ENCODE measurements at regions of chr10 and their contacts with region 1.

Region 1: DNA sequence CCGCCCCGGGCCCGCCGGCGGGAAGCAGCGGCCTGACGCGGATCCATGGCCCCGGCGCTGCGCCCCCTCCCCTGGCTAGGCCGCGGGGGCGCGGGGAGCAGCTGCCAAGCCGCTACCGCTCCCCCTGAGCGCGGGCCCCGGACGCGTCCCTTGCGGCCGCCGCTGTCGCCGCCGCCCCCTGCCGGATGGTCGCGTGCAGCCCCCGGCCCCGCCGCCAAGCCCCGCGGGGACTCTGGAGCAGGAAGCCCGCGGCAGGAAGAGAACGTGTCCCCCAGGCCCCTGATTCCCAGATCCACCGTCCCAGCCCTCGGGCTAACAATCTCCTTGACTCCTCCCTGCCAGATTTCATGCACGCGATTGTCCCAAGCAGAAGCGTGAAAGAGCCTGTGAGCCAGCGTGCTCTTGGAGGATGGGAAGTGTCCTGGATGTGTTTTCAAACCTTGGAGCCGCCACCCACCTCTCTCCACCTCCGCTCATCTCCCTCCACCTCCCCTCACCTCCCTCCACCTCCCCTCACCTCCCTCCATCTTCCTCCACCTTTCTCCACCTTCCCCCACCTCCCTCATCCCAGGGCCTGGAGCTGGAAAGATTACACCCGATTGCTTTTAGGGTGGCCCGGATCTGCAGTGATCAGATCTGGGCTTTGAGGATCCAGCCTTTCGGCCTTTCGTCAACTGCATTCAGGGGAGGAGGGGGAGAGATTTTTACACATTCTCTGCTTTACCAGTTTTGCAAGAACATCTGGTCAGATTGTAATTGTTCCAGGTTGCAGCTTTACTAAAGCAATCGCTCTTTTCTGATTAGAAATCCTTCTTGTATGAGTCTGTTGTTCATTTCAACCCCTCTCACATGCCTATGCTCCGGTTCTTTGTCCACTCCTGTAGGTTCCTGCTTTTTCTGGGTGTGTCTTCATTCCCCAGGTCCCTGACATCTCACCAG is 570 bp upstream of the PRTFDC1 start:
- DNase-seq: peak; percentile 53
- H3K4me3 ChIP-seq: peak overlapping the region; percentile 57
- H3K27ac ChIP-seq: peak overlapping the region; percentile 66
- H3K4me1 ChIP-seq: no peaks in the 10 kb centered on the region
- H3K27me3 ChIP-seq: no peaks in the 10 kb centered on the region
- CTCF ChIP-seq: peak; percentile 25

Region 2: DNA sequence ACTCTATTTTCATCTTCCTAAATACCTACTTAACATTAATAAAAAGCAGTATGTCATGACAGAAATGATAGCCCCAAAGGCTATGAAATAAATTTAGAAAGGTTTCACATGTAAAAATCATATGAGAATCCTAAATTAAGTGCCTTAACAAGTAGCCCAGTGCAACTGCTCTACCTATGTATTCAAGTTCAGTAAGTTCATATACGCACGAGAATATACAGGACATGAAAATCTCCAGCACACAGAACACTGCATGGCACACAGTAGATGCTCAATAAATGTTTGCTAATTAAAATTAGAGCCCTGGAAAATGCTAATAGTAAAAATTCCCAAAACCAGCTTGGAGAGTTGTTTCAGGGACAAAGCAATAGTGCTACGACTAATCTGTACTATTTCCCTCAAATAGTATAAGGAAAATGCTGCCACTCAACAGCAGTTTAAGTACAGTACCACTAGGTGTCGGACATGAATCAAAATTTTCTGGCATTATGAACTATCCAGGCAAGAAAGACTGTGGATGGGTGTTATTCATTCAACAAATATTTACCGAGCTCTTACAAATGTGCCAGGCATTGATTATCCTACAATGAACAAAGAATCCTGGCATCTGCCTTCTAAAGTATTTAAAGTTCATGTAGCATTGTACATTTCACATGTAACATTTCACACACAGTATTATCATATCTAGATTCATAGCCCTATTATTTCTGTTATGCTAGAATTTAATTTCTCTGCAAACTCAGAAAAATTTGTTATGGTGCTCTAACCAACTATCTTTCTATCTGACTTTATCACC is 310.2 kb before region 1 on chr10:
- intact Hi-C with region 1: loop called (anchors 5 kb)
- DNase-seq: peak; percentile 37
- H3K4me3 ChIP-seq: no peak overlapping the region
- H3K27ac ChIP-seq: peak overlapping the region; percentile 19
- H3K4me1 ChIP-seq: peaks cover 7% of the 10 kb centered on the region
- H3K27me3 ChIP-seq: no peaks in the 10 kb centered on the region
- CTCF ChIP-seq: peak; percentile 77

Region 3: GRCh38 chr10:24724381-24725228 is 228.4 kb before region 1 on chr10:
- intact Hi-C with region 1: loop called (anchors 10 kb)
- DNase-seq: peak; percentile 99
- H3K4me3 ChIP-seq: peak overlapping the region; percentile 61
- H3K27ac ChIP-seq: peak overlapping the region; percentile 97
- H3K4me1 ChIP-seq: peaks cover 2% of the 10 kb centered on the region
- H3K27me3 ChIP-seq: no peaks in the 10 kb centered on the region
- CTCF ChIP-seq: no peak

Region 4: GRCh38 chr10:25015828-25016375 is 62.9 kb after region 1 on chr10 and contains the start of gene ENKUR:
- intact Hi-C with region 1: no loop called
- DNase-seq: peak; percentile 94
- H3K4me3 ChIP-seq: peak within 1 kb of the TSS; percentile 49
- H3K27ac ChIP-seq: peak within 1 kb of the TSS; percentile 88
- H3K4me1 ChIP-seq: peaks cover 2% of the 10 kb centered on the region
- H3K27me3 ChIP-seq: no peaks in the 10 kb centered on the region
- CTCF ChIP-seq: no peak
- total RNA-seq, gene ENKUR: 0.20 to 0.48 TPM